Heart left ventricle (tissue), 16 donors: ENCODE measurements at regions of chr12 and their contacts with region 1.

Region 1: DNA sequence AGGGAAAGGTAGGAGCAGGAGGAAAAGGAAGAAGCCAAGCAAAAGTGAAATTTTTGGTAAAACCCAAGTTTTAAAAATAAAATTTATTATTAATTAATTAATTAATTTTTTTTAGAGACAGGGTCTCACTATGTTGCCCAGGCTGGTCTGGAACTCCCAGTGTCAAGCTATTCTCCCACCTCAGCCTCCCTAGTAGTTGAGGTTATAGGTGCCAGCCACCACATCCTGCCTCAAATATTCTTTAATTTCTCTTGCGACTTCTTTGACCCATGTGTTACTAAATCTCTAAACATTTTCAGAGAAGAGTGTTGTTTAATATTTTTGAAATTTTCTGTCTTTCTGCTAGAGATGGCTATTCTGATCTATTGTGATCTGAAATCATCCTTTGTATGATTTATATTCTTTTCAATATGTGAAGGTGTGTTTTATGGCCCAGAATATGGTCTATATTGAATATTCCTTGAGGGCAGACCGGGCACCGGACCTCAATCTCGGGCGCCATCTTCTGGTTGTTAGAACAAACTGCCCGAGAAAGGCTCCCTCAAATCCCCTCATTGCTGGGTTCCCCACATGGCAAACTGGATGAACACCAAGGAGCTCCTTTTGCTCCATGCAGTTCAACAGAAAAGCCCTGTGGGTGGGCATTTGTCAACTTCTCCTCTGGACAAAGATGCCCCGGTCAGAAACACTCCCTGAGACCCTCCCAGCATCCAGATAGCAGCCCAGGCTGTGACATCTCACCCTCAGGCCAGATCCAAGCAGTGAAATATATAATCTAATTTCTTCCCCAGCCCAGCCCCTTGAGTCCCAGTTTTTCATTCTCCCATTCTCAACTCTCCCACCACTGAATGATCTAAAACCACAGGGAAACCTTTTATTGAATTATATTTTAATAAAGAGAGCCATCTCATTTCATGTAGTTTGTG is 110.5 kb downstream of the ASCL4 start:
- DNase-seq: peak in 3 of 5 donors; percentile 20 to 53 (median 34)
- ATAC-seq: peak in 3 of 4 donors; percentile 31 to 60 (median 52)
- H3K4me3 ChIP-seq: no peak overlapping the region
- H3K27ac ChIP-seq: no peak overlapping the region
- H3K4me1 ChIP-seq: no peaks in the 10 kb centered on the region
- H3K27me3 ChIP-seq: peaks cover 0 to 33% (median 13%) of the 10 kb centered on the region in 9 donors
- CTCF ChIP-seq: peak; percentile 44 to 72 (median 58)
- POLR2A ChIP-seq: no peak

Region 2: DNA sequence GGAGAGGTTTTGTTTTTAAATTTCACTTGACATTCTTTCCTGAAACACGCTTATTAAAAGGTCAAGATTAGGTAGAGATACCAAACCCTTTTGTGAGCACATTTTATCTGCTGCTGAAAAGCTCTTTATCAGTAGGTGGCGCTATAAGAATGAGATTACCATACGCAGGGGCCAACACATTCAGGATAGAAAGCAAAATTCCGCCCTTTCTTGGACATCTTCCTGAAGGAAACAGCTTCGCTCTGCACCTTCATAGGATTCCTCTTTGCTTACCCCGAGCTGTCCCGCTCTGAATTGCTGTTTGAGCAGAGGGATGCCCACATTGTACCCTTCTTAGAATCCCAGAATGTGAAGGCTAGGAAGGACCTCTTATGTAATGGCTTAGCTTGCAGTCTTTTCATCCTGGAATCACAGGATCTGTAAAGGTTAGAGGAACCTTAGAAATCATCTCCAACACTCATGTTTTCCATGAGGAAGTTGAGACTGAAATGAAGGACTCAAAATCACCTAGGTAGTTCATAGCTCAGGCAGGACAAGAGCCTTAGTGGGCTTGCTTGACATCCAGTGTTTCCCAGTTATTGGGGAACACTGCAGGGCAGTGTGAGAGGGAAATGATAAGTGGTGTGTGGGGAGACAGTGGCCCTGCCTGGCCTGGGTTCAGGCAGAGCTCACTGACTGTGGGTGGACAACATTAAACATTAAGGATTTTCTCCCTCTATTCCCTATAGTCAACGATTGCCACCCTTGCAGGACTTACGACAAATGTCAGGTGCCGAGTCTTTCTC is 753.0 kb before region 1 on chr12:
- intact Hi-C with region 1: loop called in 1 of 10 experiments (anchors 5 kb)
- DNase-seq: peak in 1 of 5 donors; percentile 18
- ATAC-seq: peak in 3 of 4 donors; percentile 44 to 65 (median 54)
- H3K4me3 ChIP-seq: no peak overlapping the region
- H3K27ac ChIP-seq: no peak overlapping the region
- H3K4me1 ChIP-seq: peaks cover 0 to 6% (median 0%) of the 10 kb centered on the region in 12 donors
- H3K27me3 ChIP-seq: peaks cover 0 to 8% (median 0%) of the 10 kb centered on the region in 9 donors
- CTCF ChIP-seq: peak; percentile 53 to 88 (median 75)
- POLR2A ChIP-seq: no peak

Region 3: GRCh38 chr12:107670999-107671643 is 213.9 kb before region 1 on chr12:
- intact Hi-C with region 1: loop called in 9 of 10 experiments (anchors 2 to 5 kb)
- DNase-seq: no peak
- ATAC-seq: no peak
- H3K4me3 ChIP-seq: no peak overlapping the region
- H3K27ac ChIP-seq: no peak overlapping the region
- H3K4me1 ChIP-seq: no peaks in the 10 kb centered on the region
- H3K27me3 ChIP-seq: peaks cover 0 to 36% (median 6%) of the 10 kb centered on the region in 9 donors
- CTCF ChIP-seq: peak; percentile 15 to 55 (median 44)
- POLR2A ChIP-seq: no peak

Region 4: GRCh38 chr12:107679336-107679735 is 205.7 kb before region 1 on chr12:
- intact Hi-C with region 1: loop called in 9 of 10 experiments (anchors 2 to 5 kb)
- DNase-seq: no peak
- ATAC-seq: no peak
- H3K4me3 ChIP-seq: no peak overlapping the region
- H3K27ac ChIP-seq: no peak overlapping the region
- H3K4me1 ChIP-seq: peaks cover 0 to under 1% (median 0%) of the 10 kb centered on the region in 12 donors
- H3K27me3 ChIP-seq: peaks cover 0 to 29% (median 9%) of the 10 kb centered on the region in 9 donors
- CTCF ChIP-seq: no peak
- POLR2A ChIP-seq: no peak

Region 5: GRCh38 chr12:107760809-107761501 is 124.1 kb before region 1 on chr12 and contains the start of gene PRDM4:
- intact Hi-C with region 1: loop called in 7 of 10 experiments (anchors 5 to 10 kb)
- DNase-seq: peak; percentile 93 to 96 (median 96)
- ATAC-seq: peak; percentile 96 to 99 (median 98)
- H3K4me3 ChIP-seq: peak within 1 kb of the TSS; percentile 76 to 94 (median 85)
- H3K27ac ChIP-seq: peak within 1 kb of the TSS in 11 of 12 donors; percentile 59 to 87 (median 77)
- H3K4me1 ChIP-seq: peaks cover 5 to 35% (median 28%) of the 10 kb centered on the region in 12 donors
- H3K27me3 ChIP-seq: no peaks in the 10 kb centered on the region
- CTCF ChIP-seq: peak in 11 of 12 donors; percentile 13 to 66 (median 44)
- POLR2A ChIP-seq: peak; percentile 45 to 93
- total RNA-seq, gene PRDM4: 11.6 to 24.6 (median 15.0) TPM

Region 6: DNA sequence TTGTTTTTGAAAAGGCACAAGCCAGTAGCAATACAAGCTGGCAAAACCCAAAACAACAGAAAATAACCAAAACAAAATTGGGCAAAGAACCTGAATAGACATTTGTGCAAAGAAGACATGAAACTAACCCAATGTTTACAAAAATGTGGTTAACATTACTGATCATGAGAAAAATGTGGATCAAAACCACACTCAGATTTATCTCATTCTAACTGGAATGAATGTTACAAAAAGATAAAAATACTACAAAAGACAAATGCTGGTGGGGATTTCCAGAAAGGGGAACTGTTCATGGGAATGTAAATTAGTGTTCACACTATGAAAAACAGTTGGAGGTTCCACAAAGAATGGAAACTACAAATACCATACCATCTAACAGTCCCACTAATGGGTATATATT is 83.9 kb before region 1 on chr12:
- intact Hi-C with region 1: no loop called
- DNase-seq: no peak
- ATAC-seq: no peak
- H3K4me3 ChIP-seq: no peak overlapping the region
- H3K27ac ChIP-seq: no peak overlapping the region
- H3K4me1 ChIP-seq: no peaks in the 10 kb centered on the region
- H3K27me3 ChIP-seq: no peaks in the 10 kb centered on the region
- CTCF ChIP-seq: no peak
- POLR2A ChIP-seq: no peak